ENCODE measurements at regions of chr22 and their contacts with region 1.

Region 1: GRCh38 chr22:36301384-36301828 is 48.5 kb downstream of the APOL1 start:
- DNase-seq: peak; percentile 71 to 93
- H3K4me3 ChIP-seq: no peak overlapping the region
- H3K27ac ChIP-seq: no peak overlapping the region
- H3K4me1 ChIP-seq: no peaks in the 10 kb centered on the region
- H3K27me3 ChIP-seq: no peaks in the 10 kb centered on the region
- CTCF ChIP-seq: peak; percentile 86 to 99 (median 98)
- EP300 ChIP-seq: no peak
- POLR2A ChIP-seq: 0 out of 3 replicates have a peak, but pooled peaks of 1 of the 2 experiments have one; percentile 41
- RAD21 ChIP-seq: peak; percentile 89

Region 2: GRCh38 chr22:35627264-35628041 is 674.0 kb before region 1 on chr22:
- CTCF ChIA-PET with region 1: no interaction called
- POLR2A ChIA-PET with region 1: no interaction called
- DNase-seq: peak; percentile 63 to 81
- H3K4me3 ChIP-seq: peak overlapping the region; percentile 35 to 61 (median 56)
- H3K27ac ChIP-seq: peak overlapping the region; percentile 35; the same call in 1 of the 2 replicates
- H3K4me1 ChIP-seq: peaks cover 0 to 15% (median 10%) of the 10 kb centered on the region in 4 experiments; a peak in 6 of 7 replicates
- H3K27me3 ChIP-seq: peaks cover 0 to 2% (median 0%) of the 10 kb centered on the region in 4 experiments; a peak in 1 of 7 replicates
- CTCF ChIP-seq: peak; percentile 77 to 79 (median 78)
- EP300 ChIP-seq: no peak
- POLR2A ChIP-seq: peak in 1 of 2 experiments; percentile 77; a peak in 2 of 3 replicates
- RAD21 ChIP-seq: peak; percentile 91 to 94

Region 3: GRCh38 chr22:36211237-36211861 is 90.1 kb before region 1 on chr22:
- CTCF ChIA-PET with region 1: no interaction called
- POLR2A ChIA-PET with region 1: no interaction called
- DNase-seq: no peak
- H3K4me3 ChIP-seq: no peak overlapping the region
- H3K27ac ChIP-seq: no peak overlapping the region
- H3K4me1 ChIP-seq: no peaks in the 10 kb centered on the region
- H3K27me3 ChIP-seq: no peaks in the 10 kb centered on the region; a peak in 2 of 7 replicates
- CTCF ChIP-seq: no peak
- EP300 ChIP-seq: no peak
- POLR2A ChIP-seq: no peak
- RAD21 ChIP-seq: no peak

Region 4: GRCh38 chr22:36286471-36287224 is 14.8 kb before region 1 on chr22:
- CTCF ChIA-PET with region 1: interaction called, 159 read pairs
- POLR2A ChIA-PET with region 1: interaction called, 5 read pairs
- DNase-seq: peak; percentile 44 to 93
- H3K4me3 ChIP-seq: no peak overlapping the region
- H3K27ac ChIP-seq: peak overlapping the region; percentile 49; the same call in 1 of the 2 replicates
- H3K4me1 ChIP-seq: peaks cover 0 to 3% (median 0%) of the 10 kb centered on the region in 4 experiments; a peak in 3 of 7 replicates
- H3K27me3 ChIP-seq: no peaks in the 10 kb centered on the region
- CTCF ChIP-seq: peak; percentile 90 to 99 (median 98)
- EP300 ChIP-seq: 0 out of 3 replicates have a peak, but pooled peaks of 1 of the 2 experiments have one; percentile 32
- POLR2A ChIP-seq: 0 out of 3 replicates have a peak, but pooled peaks of 1 of the 2 experiments have one; percentile 18
- RAD21 ChIP-seq: peak; percentile 80 to 87

Region 5: GRCh38 chr22:36325154-36326031 is 24.0 kb after region 1 on chr22:
- CTCF ChIA-PET with region 1: interaction called, 37 read pairs
- POLR2A ChIA-PET with region 1: interaction called, 4 read pairs
- DNase-seq: no peak
- H3K4me3 ChIP-seq: no peak overlapping the region
- H3K27ac ChIP-seq: no peak overlapping the region
- H3K4me1 ChIP-seq: peaks cover 9 to 21% (median 17%) of the 10 kb centered on the region in 4 experiments
- H3K27me3 ChIP-seq: no peaks in the 10 kb centered on the region
- CTCF ChIP-seq: no peak
- EP300 ChIP-seq: no peak
- POLR2A ChIP-seq: no peak
- RAD21 ChIP-seq: no peak

Region 6: DNA sequence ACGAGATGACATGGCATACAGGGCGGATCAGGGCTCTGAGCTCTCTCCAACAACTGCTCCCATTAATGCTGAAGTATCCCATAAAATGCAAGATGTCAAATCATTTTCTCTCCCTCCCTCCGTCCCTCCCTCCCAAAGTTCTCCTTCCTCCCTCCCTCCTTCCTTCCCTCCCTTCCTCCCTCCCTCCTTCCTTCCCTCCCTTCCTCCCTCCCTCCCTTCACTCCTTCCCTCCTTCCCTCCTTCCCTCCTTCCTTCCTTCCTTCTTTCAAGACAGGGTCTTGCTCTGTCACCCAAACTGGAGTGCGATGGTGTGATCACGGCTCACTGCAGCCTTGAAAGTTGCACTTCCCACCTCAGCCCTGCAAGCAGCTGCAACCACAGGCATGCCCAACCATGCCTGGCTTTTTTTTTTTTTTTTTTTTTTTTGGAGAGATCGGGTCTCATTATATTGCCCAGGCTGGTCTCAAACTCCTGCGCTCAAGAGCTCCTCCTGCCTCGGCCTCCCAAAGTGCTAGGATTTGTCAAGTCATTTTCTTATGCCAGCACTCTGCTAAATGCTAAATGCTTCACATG is 141.9 kb after region 1 on chr22:
- CTCF ChIA-PET with region 1: interaction called, 13 read pairs
- POLR2A ChIA-PET with region 1: no interaction called
- DNase-seq: no peak
- H3K4me3 ChIP-seq: no peak overlapping the region
- H3K27ac ChIP-seq: no peak overlapping the region
- H3K4me1 ChIP-seq: peaks cover 0 to 5% (median 2%) of the 10 kb centered on the region in 4 experiments; a peak in 3 of 7 replicates
- H3K27me3 ChIP-seq: no peaks in the 10 kb centered on the region
- CTCF ChIP-seq: no peak
- EP300 ChIP-seq: no peak
- POLR2A ChIP-seq: no peak
- RAD21 ChIP-seq: no peak

Region 7: GRCh38 chr22:36470162-36470993 is 169.0 kb after region 1 on chr22:
- CTCF ChIA-PET with region 1: interaction called, 78 read pairs
- POLR2A ChIA-PET with region 1: interaction called, 4 read pairs
- DNase-seq: peak; percentile 65 to 83
- H3K4me3 ChIP-seq: no peak overlapping the region
- H3K27ac ChIP-seq: peak overlapping the region; percentile 30; the same call in 1 of the 2 replicates
- H3K4me1 ChIP-seq: peaks cover 0 to 2% (median 0%) of the 10 kb centered on the region in 4 experiments; a peak in 2 of 7 replicates
- H3K27me3 ChIP-seq: no peaks in the 10 kb centered on the region
- CTCF ChIP-seq: peak; percentile 85 to 96 (median 95)
- EP300 ChIP-seq: no peak
- POLR2A ChIP-seq: 0 out of 3 replicates have a peak, but pooled peaks of 1 of the 2 experiments have one; percentile 28
- RAD21 ChIP-seq: peak; percentile 98 to 99

Region 8: DNA sequence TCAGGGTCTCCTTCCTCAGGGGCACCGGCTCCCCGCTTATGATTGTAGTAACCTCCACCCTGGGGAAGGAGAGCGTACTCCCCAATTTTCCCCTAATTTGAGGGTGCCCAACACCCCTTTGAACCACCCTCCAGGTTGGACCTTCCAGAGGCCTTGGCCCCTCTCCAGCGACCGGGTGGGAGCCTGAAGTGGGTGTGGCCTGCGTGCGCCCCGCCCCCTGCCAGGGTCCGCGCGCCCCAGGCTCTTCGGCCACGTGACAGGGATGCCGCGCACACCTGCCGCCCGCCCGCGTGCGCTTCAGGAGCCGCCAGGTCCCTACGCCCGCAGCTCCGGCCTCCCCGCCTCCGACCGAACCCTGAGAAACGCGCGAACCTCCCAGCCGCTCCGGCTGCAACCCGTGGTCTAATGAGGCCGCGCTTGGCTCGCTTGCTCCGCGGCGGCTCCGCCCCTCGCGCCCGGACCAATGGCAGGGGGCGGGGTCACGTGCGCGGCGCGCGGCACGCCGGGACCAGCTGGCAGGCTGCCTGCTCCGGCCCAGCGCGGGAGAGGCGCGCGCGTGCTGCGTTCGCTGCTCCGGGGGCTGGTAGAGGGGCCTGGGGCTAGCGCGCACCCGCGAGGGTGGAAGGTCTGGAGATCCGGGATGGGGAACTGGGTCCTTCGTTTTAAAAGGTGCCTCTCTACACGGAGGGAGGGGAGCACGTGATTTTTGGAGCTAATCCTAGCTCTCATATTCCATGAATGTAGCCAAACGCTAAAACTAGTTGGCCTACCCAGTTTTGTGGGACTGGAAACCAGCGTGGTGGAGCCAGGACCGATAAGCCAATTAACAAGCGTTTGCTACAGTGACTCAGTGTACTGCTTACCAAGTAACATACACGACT is 205.5 kb after region 1 on chr22 and contains the start of gene FOXRED2:
- CTCF ChIA-PET with region 1: interaction called, 11 read pairs
- POLR2A ChIA-PET with region 1: no interaction called
- DNase-seq: peak; percentile 39 to 94
- H3K4me3 ChIP-seq: peak within 1 kb of the TSS in 3 of 4 experiments; percentile 33 to 58 (median 39); a peak in 6 of 8 replicates
- H3K27ac ChIP-seq: no peak within 1 kb of the TSS; the same call in 1 of the 2 replicates
- H3K4me1 ChIP-seq: peaks cover 0 to 5% (median 0%) of the 10 kb centered on the region in 4 experiments; a peak in 1 of 7 replicates
- H3K27me3 ChIP-seq: peaks cover 0 to 11% (median 6%) of the 10 kb centered on the region in 4 experiments; a peak in 4 of 7 replicates
- CTCF ChIP-seq: 0 out of 4 replicates have a peak, but pooled peaks of 1 of the 3 experiments have one; percentile 0
- EP300 ChIP-seq: no peak
- POLR2A ChIP-seq: peak in 1 of 2 experiments; percentile 72; a peak in 2 of 3 replicates
- RAD21 ChIP-seq: no peak
- total RNA-seq, gene FOXRED2: 27.8 and 31.5 TPM in 2 replicates

Measured in H1 (cell line).